HepG2 (cell line): ENCODE measurements at regions of chr16 and their contacts with region 1.

Region 1: GRCh38 chr16:29700253-29700987 is 21.4 kb downstream of the QPRT start:
- DNase-seq: peak; percentile 71
- ATAC-seq: peak; percentile 64
- H3K4me3 ChIP-seq: no peak overlapping the region
- H3K27ac ChIP-seq: no peak overlapping the region
- H3K4me1 ChIP-seq: peaks cover 19% of the 10 kb centered on the region
- H3K27me3 ChIP-seq: peaks cover 0 to 4% of the 10 kb centered on the region in 2 experiments; a peak in 1 of 5 replicates
- CTCF ChIP-seq: peak; percentile 92
- EP300 ChIP-seq: no peak
- POLR2A ChIP-seq: no peak
- RAD21 ChIP-seq: peak; percentile 91

Region 2: DNA sequence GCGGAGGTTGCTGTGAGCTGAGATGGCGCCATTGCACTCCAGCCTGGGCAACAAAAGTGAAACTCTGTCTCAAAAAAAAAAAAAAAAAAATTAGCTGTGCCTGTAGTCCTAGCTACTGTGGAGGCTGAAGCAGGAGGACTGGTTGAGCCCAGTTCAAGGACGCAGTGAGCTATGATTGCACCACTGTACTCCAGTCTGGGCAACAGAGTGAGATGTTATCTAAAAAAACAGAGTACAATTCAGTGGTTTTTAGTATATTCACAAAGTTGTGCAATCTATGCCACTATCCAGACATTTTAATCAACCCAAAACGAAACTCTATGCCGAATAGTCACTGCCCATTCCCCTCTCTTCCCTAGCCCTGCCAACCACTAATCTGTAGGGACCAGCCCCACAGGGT is 20.3 kb after region 1 on chr16:
- CTCF ChIA-PET with region 1: interaction called, 23 read pairs
- POLR2A ChIA-PET with region 1: interaction called, 3 read pairs
- in situ Hi-C with region 1: no loop called
- intact Hi-C with region 1: loop called (anchors 1 kb)
- DNase-seq: peak; percentile 80
- ATAC-seq: peak; percentile 88
- H3K4me3 ChIP-seq: peak overlapping the region; percentile 28 to 53 (median 30); a peak in 5 of 6 replicates
- H3K27ac ChIP-seq: peak overlapping the region; percentile 25
- H3K4me1 ChIP-seq: peaks cover 20% of the 10 kb centered on the region
- H3K27me3 ChIP-seq: peaks cover 0 to 3% of the 10 kb centered on the region in 2 experiments; a peak in 2 of 5 replicates
- CTCF ChIP-seq: no peak; the same call in 1 of the 2 replicates
- EP300 ChIP-seq: no peak; a peak in 1 of 4 replicates
- POLR2A ChIP-seq: no peak
- RAD21 ChIP-seq: no peak

Region 3: DNA sequence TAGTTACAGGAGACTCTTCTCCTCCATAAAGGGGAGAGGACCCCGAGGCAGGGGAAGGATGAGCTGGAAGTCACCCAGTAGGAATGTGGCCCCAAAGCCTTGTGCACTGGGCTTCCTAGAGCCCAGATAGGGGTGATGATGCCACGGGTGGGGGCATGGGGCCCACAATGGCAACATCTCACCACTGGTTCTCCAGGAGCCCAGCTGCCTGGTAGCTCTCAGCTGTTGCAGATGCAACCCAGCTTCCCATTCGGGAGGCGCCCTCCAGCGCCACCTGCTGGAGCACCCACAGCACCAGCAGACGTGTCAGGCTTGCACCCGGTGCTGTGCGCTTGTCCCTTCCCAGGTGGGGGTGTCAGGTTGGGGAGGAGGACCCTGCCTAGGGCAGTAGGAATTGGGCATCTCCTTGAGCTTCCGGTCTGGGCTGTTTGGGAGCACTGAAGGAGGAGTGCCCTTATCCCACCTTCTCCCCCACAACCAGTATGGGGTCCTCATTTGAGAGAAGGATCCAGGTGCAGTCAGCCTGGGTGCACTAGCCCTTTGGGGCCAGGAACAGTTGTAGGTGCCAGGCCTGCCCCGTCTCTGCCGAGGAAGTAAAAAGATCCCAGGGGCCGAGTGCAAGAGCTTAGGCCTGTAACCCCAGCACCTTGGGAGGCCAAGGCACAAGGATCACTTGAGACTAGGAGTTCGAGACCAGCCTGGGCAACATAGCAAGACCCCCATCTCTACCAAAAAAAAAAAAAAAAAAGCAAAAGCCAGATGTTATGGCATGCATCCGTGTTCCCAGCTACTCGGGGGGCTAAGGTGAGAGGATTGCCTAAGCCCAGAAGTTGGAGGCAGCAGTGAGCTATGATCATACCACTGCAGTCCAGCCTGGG is 148.2 kb after region 1 on chr16:
- CTCF ChIA-PET with region 1: interaction called, 4 read pairs
- POLR2A ChIA-PET with region 1: interaction called, 8 read pairs
- in situ Hi-C with region 1: no loop called
- intact Hi-C with region 1: loop called (anchors 2 kb)
- DNase-seq: peak; percentile 65
- ATAC-seq: peak; percentile 90
- H3K4me3 ChIP-seq: no peak overlapping the region
- H3K27ac ChIP-seq: no peak overlapping the region
- H3K4me1 ChIP-seq: no peaks in the 10 kb centered on the region
- H3K27me3 ChIP-seq: no peaks in the 10 kb centered on the region
- CTCF ChIP-seq: peak; percentile 99
- EP300 ChIP-seq: no peak
- POLR2A ChIP-seq: no peak
- RAD21 ChIP-seq: peak; percentile 98

Region 4: GRCh38 chr16:30032083-30032819 is 331.8 kb after region 1 on chr16:
- CTCF ChIA-PET with region 1: interaction called, 11 read pairs
- POLR2A ChIA-PET with region 1: interaction called, 3 read pairs
- in situ Hi-C with region 1: loop called (anchors 10 kb)
- intact Hi-C with region 1: loop called (anchors 5 kb)
- DNase-seq: peak; percentile 82
- ATAC-seq: peak; percentile 65
- H3K4me3 ChIP-seq: no peak overlapping the region
- H3K27ac ChIP-seq: no peak overlapping the region
- H3K4me1 ChIP-seq: peaks cover 23% of the 10 kb centered on the region
- H3K27me3 ChIP-seq: peaks cover 11 to 51% of the 10 kb centered on the region in 2 experiments
- CTCF ChIP-seq: peak; percentile 97
- EP300 ChIP-seq: no peak; a peak in 2 of 4 replicates
- POLR2A ChIP-seq: no peak
- RAD21 ChIP-seq: peak; percentile 85